Left ventricle myocardium superior (tissue), 1 donor: ENCODE measurements at regions of chr22 and their contacts with region 1.

Region 1: DNA sequence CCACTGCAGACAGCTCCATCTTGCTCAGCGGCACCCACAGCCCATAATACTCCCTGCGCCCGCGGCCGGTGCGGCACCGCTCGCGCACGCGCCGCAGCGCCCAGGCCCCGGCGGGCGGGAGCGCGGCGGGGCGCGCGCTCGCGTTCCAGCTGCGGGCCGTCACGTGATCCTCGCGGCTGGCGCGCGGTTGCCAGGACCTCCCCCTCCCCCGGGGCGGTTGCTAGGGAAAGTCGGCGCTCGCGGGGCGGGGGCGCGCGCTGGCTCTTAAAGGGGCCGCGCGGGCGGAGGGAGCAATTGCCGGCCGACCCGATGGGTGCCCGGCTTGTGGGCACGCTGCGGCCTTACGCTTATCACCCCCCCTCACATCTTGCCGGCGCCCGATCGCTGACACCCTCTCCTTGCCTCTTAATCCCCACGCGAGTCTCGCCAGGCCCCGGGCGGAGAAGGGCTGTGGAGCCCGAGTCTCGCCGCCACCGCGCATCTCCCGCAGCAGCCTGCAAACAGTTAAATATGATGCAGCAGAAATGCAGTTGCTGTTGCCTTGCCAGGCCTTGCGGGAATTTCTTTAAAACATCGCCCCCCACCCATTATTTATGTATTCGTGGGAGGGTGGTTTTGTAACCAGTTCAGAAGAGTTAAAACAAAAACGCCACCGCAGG is at the start of gene CBX6:
- DNase-seq: peak; percentile 99
- ATAC-seq: peak; percentile 87
- total RNA-seq, gene CBX6: 37.1 TPM

Region 2: DNA sequence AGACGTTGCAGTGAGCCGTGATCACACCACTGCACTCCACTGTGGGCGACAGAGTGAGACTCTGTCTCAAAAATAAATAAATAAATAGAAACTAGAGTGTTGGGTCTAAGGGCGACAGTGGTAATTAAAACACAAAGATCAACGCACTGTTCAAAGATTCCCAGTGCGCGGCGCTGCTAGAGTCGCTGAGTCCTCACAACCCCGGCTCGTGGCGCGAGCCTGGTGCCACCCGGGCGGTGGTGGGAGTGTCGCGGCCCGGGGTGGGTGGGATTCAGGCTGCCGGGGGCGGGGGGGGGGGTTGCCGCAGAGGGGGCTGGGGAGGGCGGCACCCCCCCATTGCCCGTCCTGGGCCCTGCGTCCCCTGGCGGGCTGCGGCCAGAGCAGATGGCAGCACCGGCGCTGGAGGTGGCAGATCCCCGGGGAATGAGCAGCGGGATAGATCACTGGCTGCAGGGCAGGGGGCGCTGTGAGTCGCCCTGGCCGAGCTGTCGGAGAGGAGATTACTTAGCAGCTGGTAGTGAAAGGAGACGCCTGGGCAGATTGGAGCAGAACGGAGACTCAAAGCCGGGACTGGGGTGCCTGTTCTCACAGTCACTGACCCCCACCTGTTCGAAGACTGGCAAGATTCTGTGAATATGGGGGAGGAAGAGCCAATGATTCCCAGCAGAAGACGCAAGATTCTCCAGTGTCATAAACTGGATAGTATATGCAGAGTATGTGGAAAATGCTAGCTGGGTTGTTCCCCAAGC is 54.9 kb after region 1 on chr22:
- intact Hi-C with region 1: loop called (anchors 10 kb)
- DNase-seq: peak; percentile 85
- ATAC-seq: peak; percentile 80

Region 3: GRCh38 chr22:39123751-39124601 is 251.7 kb after region 1 on chr22:
- intact Hi-C with region 1: loop called (anchors 5 kb)
- DNase-seq: no peak
- ATAC-seq: peak; percentile 27